Transverse colon (tissue), 4 donors: ENCODE measurements at regions of chr17 and their contacts with region 1.

Region 1: GRCh38 chr17:48878918-48879898 is 13.4 kb upstream of the ATP5MC1 start:
- DNase-seq: peak; percentile 50
- H3K4me3 ChIP-seq: no peak overlapping the region
- H3K27ac ChIP-seq: no peak overlapping the region
- H3K4me1 ChIP-seq: peaks cover 0 to 21% (median 2%) of the 10 kb centered on the region in 4 donors
- H3K27me3 ChIP-seq: no peaks in the 10 kb centered on the region
- CTCF ChIP-seq: peak; percentile 91 to 95 (median 94)
- EP300 ChIP-seq: no peak
- POLR2A ChIP-seq: no peak

Region 2: DNA sequence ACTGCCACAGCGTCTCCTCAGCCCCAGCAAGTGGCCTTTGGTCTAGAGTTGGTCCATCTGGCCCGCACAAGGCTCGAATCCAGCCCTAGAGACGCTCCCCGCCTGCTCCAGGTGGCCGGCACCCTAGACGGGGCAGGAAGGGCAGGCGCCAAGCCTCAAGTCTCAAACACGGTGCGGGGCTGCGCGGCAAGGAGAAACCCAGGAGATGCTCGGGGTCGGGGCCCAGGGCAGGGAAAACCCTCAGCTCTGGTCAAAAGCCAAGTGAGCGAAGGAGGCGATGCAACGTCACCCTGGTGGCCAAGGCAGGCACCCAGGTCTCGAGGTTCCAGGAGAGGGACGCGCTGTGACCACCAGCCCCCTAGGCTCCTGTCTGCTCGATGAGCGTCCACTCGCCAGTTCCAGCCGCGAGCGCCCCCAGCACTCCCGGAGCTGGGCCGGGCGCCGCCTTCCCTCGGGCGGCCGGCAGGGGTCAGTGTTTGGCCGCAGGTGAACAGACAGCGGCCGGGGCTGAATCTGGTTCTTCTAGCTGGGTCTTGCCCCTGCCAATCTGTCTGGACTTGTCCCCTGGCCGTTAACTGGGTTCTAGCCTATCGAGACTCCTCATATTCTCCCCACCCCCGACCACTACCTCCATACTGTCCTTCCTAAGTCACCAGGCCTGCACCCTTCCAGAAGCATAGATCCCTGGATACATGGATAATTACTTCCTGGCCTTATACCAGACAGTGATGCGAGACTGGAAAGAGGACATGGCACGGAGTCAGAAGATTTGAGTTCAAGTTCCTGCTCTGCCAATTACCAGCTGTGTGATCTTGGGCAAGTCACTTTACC is 200.9 kb before region 1 on chr17:
- in situ Hi-C with region 1: loop called (anchors 5 to 10 kb)
- intact Hi-C with region 1: no loop called
- DNase-seq: peak; percentile 68
- H3K4me3 ChIP-seq: no peak overlapping the region
- H3K27ac ChIP-seq: no peak overlapping the region
- H3K4me1 ChIP-seq: peaks cover 0 to 6% (median 3%) of the 10 kb centered on the region in 4 donors
- H3K27me3 ChIP-seq: peaks cover 12% of the 10 kb centered on the region
- CTCF ChIP-seq: peak; percentile 86 to 95 (median 92)
- EP300 ChIP-seq: no peak
- POLR2A ChIP-seq: no peak

Region 3: GRCh38 chr17:48724251-48725003 is 154.8 kb before region 1 on chr17:
- in situ Hi-C with region 1: no loop called
- intact Hi-C with region 1: loop called (anchors 10 kb)
- DNase-seq: peak; percentile 92
- H3K4me3 ChIP-seq: peak overlapping the region in 1 of 4 donors; percentile 45
- H3K27ac ChIP-seq: peak overlapping the region in 1 of 4 donors; percentile 61
- H3K4me1 ChIP-seq: peaks cover 12 to 50% (median 42%) of the 10 kb centered on the region in 4 donors
- H3K27me3 ChIP-seq: peaks cover 100% of the 10 kb centered on the region
- CTCF ChIP-seq: peak; percentile 74 to 84 (median 77)
- EP300 ChIP-seq: no peak
- POLR2A ChIP-seq: no peak

Region 4: GRCh38 chr17:48747445-48748363 is 131.5 kb before region 1 on chr17:
- in situ Hi-C with region 1: no loop called
- intact Hi-C with region 1: no loop called
- DNase-seq: no peak
- H3K4me3 ChIP-seq: no peak overlapping the region
- H3K27ac ChIP-seq: no peak overlapping the region
- H3K4me1 ChIP-seq: peaks cover 0 to 6% (median 3%) of the 10 kb centered on the region in 4 donors
- H3K27me3 ChIP-seq: peaks cover 100% of the 10 kb centered on the region
- CTCF ChIP-seq: no peak
- EP300 ChIP-seq: no peak
- POLR2A ChIP-seq: no peak

Region 5: DNA sequence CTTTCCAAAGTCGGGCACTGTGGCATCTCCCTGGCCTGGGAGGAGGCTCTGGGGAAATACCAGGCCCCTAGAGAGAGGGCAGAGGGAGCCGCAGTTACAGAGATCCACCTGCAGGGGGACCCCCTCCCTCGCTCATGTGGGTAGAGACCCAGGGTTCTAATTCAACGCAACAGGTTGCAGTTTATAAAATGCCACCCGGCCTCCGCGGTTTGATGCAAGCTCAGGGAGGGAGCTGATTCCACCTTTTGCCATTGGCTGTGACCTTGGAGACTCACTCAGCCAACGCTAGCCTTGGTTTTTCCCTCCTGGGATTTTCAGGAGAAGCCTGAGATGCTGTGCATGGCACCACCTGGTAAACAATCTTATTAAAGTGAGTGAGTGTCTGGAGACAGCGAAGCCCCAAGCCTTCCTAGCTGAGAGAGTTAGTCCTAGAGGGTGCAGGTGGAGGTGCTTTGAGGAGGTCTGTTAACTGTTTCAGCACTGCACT is 74.2 kb before region 1 on chr17:
- in situ Hi-C with region 1: loop called (anchors 5 to 10 kb)
- intact Hi-C with region 1: loop called (anchors 1 kb)
- DNase-seq: peak; percentile 76
- H3K4me3 ChIP-seq: no peak overlapping the region
- H3K27ac ChIP-seq: peak overlapping the region in 2 of 4 donors; percentile 0 to 3
- H3K4me1 ChIP-seq: peaks cover 8 to 68% (median 40%) of the 10 kb centered on the region in 4 donors
- H3K27me3 ChIP-seq: no peaks in the 10 kb centered on the region
- CTCF ChIP-seq: peak; percentile 91 to 97 (median 93)
- EP300 ChIP-seq: no peak
- POLR2A ChIP-seq: no peak

Region 6: GRCh38 chr17:48814504-48814903 is 64.7 kb before region 1 on chr17:
- in situ Hi-C with region 1: loop called in 1 of 4 experiments (anchors 10 kb)
- intact Hi-C with region 1: loop called (anchors 2 kb)
- DNase-seq: peak; percentile 73
- H3K4me3 ChIP-seq: no peak overlapping the region
- H3K27ac ChIP-seq: no peak overlapping the region
- H3K4me1 ChIP-seq: peaks cover 5 to 52% (median 29%) of the 10 kb centered on the region in 4 donors
- H3K27me3 ChIP-seq: no peaks in the 10 kb centered on the region
- CTCF ChIP-seq: peak; percentile 74 to 89 (median 85)
- EP300 ChIP-seq: no peak
- POLR2A ChIP-seq: no peak

Region 7: DNA sequence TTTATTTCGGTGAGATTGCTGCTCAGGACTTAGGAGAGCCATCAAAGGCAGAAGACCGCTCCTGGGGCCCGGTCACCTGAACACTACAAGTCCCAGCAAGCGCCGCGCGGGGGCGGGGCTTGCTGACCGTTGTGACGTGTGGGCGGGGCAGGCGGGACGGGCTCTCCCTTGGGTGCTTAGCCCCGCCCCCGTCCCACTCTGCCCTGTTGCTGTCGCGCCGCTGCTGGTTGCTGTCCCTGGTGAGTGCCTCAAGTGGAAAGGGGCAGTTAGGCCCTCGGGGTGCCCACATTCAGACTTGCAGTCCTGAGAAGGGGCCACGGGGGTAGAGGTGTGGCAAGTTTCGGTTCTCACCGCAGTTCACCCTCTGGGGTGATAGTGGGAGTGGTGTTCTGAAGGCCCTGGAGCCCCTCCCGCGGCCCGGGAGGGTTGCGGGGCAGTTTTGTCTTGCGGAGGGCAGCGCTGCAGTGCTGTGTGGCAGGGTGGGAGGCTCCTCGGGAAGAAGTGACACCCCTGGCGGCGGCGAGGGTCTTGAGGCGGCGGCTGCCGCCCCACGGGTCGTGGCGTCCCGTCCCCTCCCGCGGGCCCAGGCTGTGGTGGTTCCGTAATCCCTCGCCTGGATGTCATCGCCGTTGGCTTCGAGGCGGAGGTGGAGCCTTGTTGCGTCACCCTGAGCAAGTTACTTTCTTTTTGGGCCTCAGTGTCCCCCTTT is 48.2 kb before region 1 on chr17 and contains the start of gene CALCOCO2:
- in situ Hi-C with region 1: no loop called
- intact Hi-C with region 1: no loop called
- DNase-seq: peak; percentile 97
- H3K4me3 ChIP-seq: peak within 1 kb of the TSS; percentile 70 to 96 (median 91)
- H3K27ac ChIP-seq: peak within 1 kb of the TSS; percentile 93 to 97 (median 95)
- H3K4me1 ChIP-seq: peaks cover 7 to 50% (median 26%) of the 10 kb centered on the region in 4 donors
- H3K27me3 ChIP-seq: no peaks in the 10 kb centered on the region
- CTCF ChIP-seq: peak in 1 of 5 experiments; percentile 36
- EP300 ChIP-seq: no peak
- POLR2A ChIP-seq: peak; percentile 94
- total RNA-seq, gene CALCOCO2: 141 to 292 (median 207) TPM